Activated B cell treated with CpG ODN at 0.5 μM for 24 hours (primary cell): ENCODE measurements at regions of chr11 and their contacts with region 1.

Region 1: DNA sequence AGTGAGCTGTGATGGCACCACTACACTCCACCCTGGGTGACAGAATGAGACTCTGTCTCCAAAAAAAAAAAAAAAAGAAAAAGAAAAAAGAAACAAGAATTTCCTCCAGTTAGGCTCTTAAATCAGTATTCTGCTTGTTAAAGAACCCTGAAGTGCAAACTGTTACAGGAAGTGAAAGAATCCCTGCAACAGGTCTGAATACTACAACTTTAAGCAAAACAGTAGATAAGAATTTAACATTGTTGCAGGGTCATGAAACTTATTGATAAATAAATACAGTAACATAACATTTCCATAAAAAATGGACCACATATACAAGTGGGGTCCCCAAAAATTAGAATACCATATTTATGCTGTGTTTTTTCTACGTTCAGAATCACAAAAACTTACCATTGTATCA is 35.8 kb downstream of the FCHSD2 start:
- DNase-seq: no peak
- ATAC-seq: peak; percentile 45
- H3K4me3 Mint-ChIP-seq: no peak overlapping the region
- H3K27ac Mint-ChIP-seq: peak overlapping the region; percentile 24
- H3K4me1 Mint-ChIP-seq: peaks cover 76% of the 10 kb centered on the region
- H3K27me3 Mint-ChIP-seq: no peaks in the 10 kb centered on the region
- CTCF ChIP-seq: no peak

Region 2: GRCh38 chr11:73121692-73122091 is 15.3 kb after region 1 on chr11:
- CTCF ChIA-PET with region 1: interaction called, 3 read pairs
- POLR2A ChIA-PET with region 1: interaction called, 3 read pairs
- intact Hi-C with region 1: loop called (anchors 2 kb)
- DNase-seq: no peak
- ATAC-seq: no peak
- H3K4me3 Mint-ChIP-seq: no peak overlapping the region
- H3K27ac Mint-ChIP-seq: no peak overlapping the region
- H3K4me1 Mint-ChIP-seq: peaks cover 67% of the 10 kb centered on the region
- H3K27me3 Mint-ChIP-seq: no peaks in the 10 kb centered on the region
- CTCF ChIP-seq: no peak